Activated B cell treated with CpG ODN at 0.5 μM for 24 hours (primary cell): ENCODE measurements at regions of chr1 and their contacts with region 1.

Region 1: DNA sequence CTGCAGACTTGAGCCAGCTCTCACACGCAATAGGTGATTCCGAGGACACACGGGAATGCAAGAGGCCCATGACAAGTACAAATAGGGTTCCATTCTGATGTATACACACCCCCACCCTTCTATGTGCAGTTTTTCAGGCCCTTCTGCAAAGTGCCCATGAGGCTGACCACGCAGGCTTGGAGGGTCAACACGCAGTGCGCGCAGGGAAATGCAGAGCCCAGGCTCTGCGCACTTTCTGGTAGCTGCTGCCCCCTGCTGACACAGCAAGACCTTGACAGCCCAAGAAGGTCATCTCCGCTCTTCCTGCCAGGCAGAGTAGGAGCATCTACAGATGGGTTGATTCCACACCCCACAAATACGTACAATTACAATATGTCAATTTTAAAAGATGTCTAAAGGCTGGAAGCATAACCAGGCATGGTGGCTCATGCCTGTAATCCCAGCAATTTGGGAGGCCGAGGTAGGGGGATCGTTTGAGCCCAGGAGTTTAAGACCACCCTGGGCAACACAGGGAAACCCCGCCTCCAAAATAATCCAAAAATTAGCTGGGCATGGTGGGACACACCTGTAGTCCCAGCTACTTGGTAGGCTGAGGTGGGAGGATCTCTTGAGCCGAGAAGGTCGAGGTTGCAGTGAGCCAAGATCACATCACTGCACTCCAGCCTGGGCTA is 18.5 kb downstream of the SH3BP5L start:
- DNase-seq: peak; percentile 58
- ATAC-seq: peak; percentile 53
- H3K4me3 Mint-ChIP-seq: peak overlapping the region; percentile 24
- H3K27ac Mint-ChIP-seq: peak overlapping the region; percentile 97
- H3K4me1 Mint-ChIP-seq: peaks cover 54% of the 10 kb centered on the region
- H3K27me3 Mint-ChIP-seq: no peaks in the 10 kb centered on the region
- CTCF ChIP-seq: peak; percentile 96

Region 2: DNA sequence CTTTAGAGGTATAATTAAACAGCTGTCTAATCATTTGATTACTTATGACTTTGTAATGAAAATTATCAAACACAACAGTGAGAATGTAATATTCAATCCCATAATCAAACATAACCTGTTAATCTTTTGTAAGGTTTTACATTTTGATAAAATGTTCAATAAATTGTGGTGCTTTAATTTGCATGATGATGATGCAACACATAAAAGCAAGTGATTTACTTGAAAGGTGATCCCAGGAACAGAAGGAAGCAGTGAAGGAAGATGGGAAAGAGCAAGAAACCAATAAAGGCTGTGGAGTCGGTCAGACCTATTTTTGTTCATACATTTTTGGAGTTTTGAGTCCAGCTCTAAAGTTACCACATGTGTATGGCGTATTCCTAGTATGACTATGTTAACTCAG is 1828.9 kb before region 1 on chr1:
- CTCF ChIA-PET with region 1: no interaction called
- POLR2A ChIA-PET with region 1: no interaction called
- intact Hi-C with region 1: no loop called
- DNase-seq: no peak
- ATAC-seq: no peak
- H3K4me3 Mint-ChIP-seq: no peak overlapping the region
- H3K27ac Mint-ChIP-seq: no peak overlapping the region
- H3K4me1 Mint-ChIP-seq: no peaks in the 10 kb centered on the region
- H3K27me3 Mint-ChIP-seq: no peaks in the 10 kb centered on the region
- CTCF ChIP-seq: no peak

Region 3: GRCh38 chr1:247936415-247936814 is 870.8 kb before region 1 on chr1:
- CTCF ChIA-PET with region 1: no interaction called
- POLR2A ChIA-PET with region 1: no interaction called
- intact Hi-C with region 1: loop called (anchors 2 kb)
- DNase-seq: no peak
- ATAC-seq: no peak
- H3K4me3 Mint-ChIP-seq: no peak overlapping the region
- H3K27ac Mint-ChIP-seq: no peak overlapping the region
- H3K4me1 Mint-ChIP-seq: no peaks in the 10 kb centered on the region
- H3K27me3 Mint-ChIP-seq: no peaks in the 10 kb centered on the region
- CTCF ChIP-seq: no peak

Region 4: DNA sequence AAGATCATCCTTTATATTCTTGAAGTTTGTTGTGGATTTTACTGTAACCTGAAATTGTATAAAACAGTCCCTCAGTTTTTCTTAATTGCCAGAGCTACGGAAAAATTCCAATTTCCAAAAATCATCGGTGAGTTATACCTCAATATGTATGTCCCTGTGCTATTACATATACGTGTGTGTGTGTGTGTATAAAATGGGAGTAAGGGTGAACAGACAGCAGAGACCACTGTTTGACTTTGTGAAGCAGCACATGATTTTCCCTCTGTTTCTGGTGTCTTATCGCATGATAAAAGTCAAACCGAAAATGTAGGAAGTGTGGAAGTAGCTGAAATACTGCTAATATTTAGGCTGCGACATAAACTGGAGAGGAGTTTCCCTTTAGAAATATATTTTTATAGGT is 403.2 kb before region 1 on chr1:
- CTCF ChIA-PET with region 1: interaction called, 15 read pairs
- POLR2A ChIA-PET with region 1: no interaction called
- intact Hi-C with region 1: loop called (anchors 1 kb)
- DNase-seq: no peak
- ATAC-seq: no peak
- H3K4me3 Mint-ChIP-seq: no peak overlapping the region
- H3K27ac Mint-ChIP-seq: peak overlapping the region; percentile 0
- H3K4me1 Mint-ChIP-seq: no peaks in the 10 kb centered on the region
- H3K27me3 Mint-ChIP-seq: no peaks in the 10 kb centered on the region
- CTCF ChIP-seq: no peak

Region 5: GRCh38 chr1:248686815-248687214 is 120.4 kb before region 1 on chr1:
- CTCF ChIA-PET with region 1: interaction called, 40 read pairs
- POLR2A ChIA-PET with region 1: interaction called, 22 read pairs
- intact Hi-C with region 1: loop called (anchors 1 kb)
- DNase-seq: no peak
- ATAC-seq: peak; percentile 36
- H3K4me3 Mint-ChIP-seq: peak overlapping the region; percentile 2
- H3K27ac Mint-ChIP-seq: no peak overlapping the region
- H3K4me1 Mint-ChIP-seq: peaks cover 37% of the 10 kb centered on the region
- H3K27me3 Mint-ChIP-seq: peaks cover 3% of the 10 kb centered on the region
- CTCF ChIP-seq: no peak

Region 6: GRCh38 chr1:248703674-248704073 is 103.5 kb before region 1 on chr1:
- CTCF ChIA-PET with region 1: interaction called, 45 read pairs
- POLR2A ChIA-PET with region 1: interaction called, 4 read pairs
- intact Hi-C with region 1: loop called (anchors 1 kb)
- DNase-seq: no peak
- ATAC-seq: no peak
- H3K4me3 Mint-ChIP-seq: no peak overlapping the region
- H3K27ac Mint-ChIP-seq: no peak overlapping the region
- H3K4me1 Mint-ChIP-seq: peaks cover 4% of the 10 kb centered on the region
- H3K27me3 Mint-ChIP-seq: no peaks in the 10 kb centered on the region
- CTCF ChIP-seq: no peak

Region 7: GRCh38 chr1:248793592-248793991 is 13.6 kb before region 1 on chr1:
- CTCF ChIA-PET with region 1: interaction called, 23 read pairs
- POLR2A ChIA-PET with region 1: interaction called, 22 read pairs
- intact Hi-C with region 1: loop called (anchors 1 kb)
- DNase-seq: no peak
- ATAC-seq: no peak
- H3K4me3 Mint-ChIP-seq: no peak overlapping the region
- H3K27ac Mint-ChIP-seq: peak overlapping the region; percentile 93
- H3K4me1 Mint-ChIP-seq: peaks cover 45% of the 10 kb centered on the region
- H3K27me3 Mint-ChIP-seq: no peaks in the 10 kb centered on the region
- CTCF ChIP-seq: no peak